ENCODE measurements at regions of chr5 and their contacts with region 1.

Region 1: GRCh38 chr5:87340716-87341115 is 72.0 kb downstream of the CCNH start:
- DNase-seq: peak; percentile 69
- H3K4me3 Mint-ChIP-seq: peak overlapping the region; percentile 70
- H3K27ac Mint-ChIP-seq: peak overlapping the region; percentile 67
- H3K4me1 Mint-ChIP-seq: peaks cover 17% of the 10 kb centered on the region
- H3K27me3 Mint-ChIP-seq: no peaks in the 10 kb centered on the region

Region 2: DNA sequence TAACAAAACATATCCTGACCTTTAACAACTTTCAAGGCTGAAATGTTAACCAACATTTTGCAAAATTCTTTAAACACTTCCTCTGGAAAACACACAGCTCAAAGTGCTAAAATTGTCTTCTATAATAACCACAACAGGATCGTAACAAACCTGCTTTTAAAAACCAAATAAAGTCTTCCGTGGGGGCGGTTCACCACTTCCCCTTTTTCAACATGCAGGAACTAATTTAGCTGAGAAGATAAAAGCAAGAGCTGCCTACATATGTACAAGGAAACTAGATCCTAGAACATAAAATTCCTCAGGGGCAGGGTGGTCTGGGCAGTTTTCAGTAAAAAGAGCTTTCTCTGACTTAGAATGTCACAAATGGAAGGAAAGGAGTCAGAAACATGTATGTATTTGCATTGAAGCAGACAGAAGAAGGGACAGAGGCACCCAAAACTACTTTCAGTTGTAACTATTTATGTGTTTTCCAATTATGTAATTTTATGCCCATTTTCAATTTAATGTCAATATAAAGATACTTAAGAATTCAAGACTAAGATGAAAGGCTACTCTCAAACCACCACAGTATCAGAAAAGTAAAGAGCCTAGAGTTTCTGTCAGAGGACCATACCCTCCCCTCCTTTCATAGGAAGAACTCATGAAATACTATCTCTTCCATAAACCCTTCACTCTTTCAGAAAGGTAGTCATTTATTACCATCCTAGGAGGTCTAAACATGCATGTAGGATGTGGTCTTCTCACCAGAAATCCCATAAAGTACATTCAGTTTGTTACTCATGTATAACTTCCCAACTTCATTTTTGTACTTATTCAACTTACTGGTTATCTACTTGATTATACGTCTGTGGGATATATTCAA is 259.0 kb before region 1 on chr5:
- intact Hi-C with region 1: loop called (anchors 5 kb)
- DNase-seq: peak; percentile 82
- H3K4me3 Mint-ChIP-seq: peak overlapping the region; percentile 69
- H3K27ac Mint-ChIP-seq: peak overlapping the region; percentile 79
- H3K4me1 Mint-ChIP-seq: peaks cover 35% of the 10 kb centered on the region
- H3K27me3 Mint-ChIP-seq: no peaks in the 10 kb centered on the region

Region 3: DNA sequence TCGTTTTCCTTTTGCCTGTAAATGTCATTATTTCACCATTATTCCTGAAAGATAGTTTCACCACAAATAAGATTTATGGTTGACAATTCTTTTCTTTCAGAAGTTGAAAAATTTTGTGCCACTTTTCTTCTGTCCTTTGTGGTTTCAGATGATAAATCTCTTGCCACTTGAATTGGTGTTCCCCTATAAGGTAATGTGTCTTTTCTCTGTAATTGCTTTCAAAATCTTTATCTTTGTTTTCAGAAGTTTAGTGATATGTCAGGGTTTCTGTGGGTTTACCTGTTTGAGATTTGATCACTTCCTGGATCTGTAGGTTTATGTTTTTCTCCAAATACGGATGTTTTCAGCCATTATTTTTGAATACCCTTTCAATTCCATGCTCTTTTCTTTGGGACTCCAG is 58.4 kb before region 1 on chr5:
- intact Hi-C with region 1: loop called (anchors 5 kb)
- DNase-seq: no peak
- H3K4me3 Mint-ChIP-seq: peak overlapping the region; percentile 78
- H3K27ac Mint-ChIP-seq: peak overlapping the region; percentile 72
- H3K4me1 Mint-ChIP-seq: peaks cover 25% of the 10 kb centered on the region
- H3K27me3 Mint-ChIP-seq: no peaks in the 10 kb centered on the region

Region 4: GRCh38 chr5:87327998-87328397 is 12.7 kb before region 1 on chr5:
- intact Hi-C with region 1: loop called (anchors 1 kb)
- DNase-seq: no peak
- H3K4me3 Mint-ChIP-seq: no peak overlapping the region
- H3K27ac Mint-ChIP-seq: no peak overlapping the region
- H3K4me1 Mint-ChIP-seq: peaks cover 13% of the 10 kb centered on the region
- H3K27me3 Mint-ChIP-seq: no peaks in the 10 kb centered on the region

Region 5: GRCh38 chr5:87412630-87413342 is 72.1 kb after region 1 on chr5 and contains the start of gene CCNH:
- intact Hi-C with region 1: loop called (anchors 5 kb)
- DNase-seq: peak; percentile 99
- H3K4me3 Mint-ChIP-seq: peak within 1 kb of the TSS; percentile 96
- H3K27ac Mint-ChIP-seq: peak within 1 kb of the TSS; percentile 94
- H3K4me1 Mint-ChIP-seq: peaks cover 31% of the 10 kb centered on the region
- H3K27me3 Mint-ChIP-seq: peaks cover 8% of the 10 kb centered on the region
- total RNA-seq, gene CCNH: 67.2 and 75.6 TPM in 2 replicates

Measured in activated CD4-positive, alpha-beta T cell treated with anti-CD3 and anti-CD28 coated beads, Interleukin-2, amount 10 ng/mL, durations not matched to agents 24 days and 14 days (primary cell).